ENCODE measurements at regions of chr12 and their contacts with region 1.

Region 1: GRCh38 chr12:56448860-56449621 is at the start of gene TIMELESS:
- DNase-seq: peak; percentile 97
- H3K4me3 Mint-ChIP-seq: peak within 1 kb of the TSS; percentile 95
- H3K27ac Mint-ChIP-seq: peak within 1 kb of the TSS; percentile 90
- H3K4me1 Mint-ChIP-seq: peaks cover 29% of the 10 kb centered on the region
- H3K27me3 Mint-ChIP-seq: no peaks in the 10 kb centered on the region
- total RNA-seq, gene TIMELESS: 46.5 and 48.8 TPM in 2 replicates

Region 2: GRCh38 chr12:56333679-56334489 is 115.2 kb before region 1 on chr12 and contains the start of gene PAN2:
- intact Hi-C with region 1: loop called (anchors 2 kb)
- DNase-seq: peak; percentile 98
- H3K4me3 Mint-ChIP-seq: peak within 1 kb of the TSS; percentile 88
- H3K27ac Mint-ChIP-seq: peak within 1 kb of the TSS; percentile 99
- H3K4me1 Mint-ChIP-seq: peaks cover 42% of the 10 kb centered on the region
- H3K27me3 Mint-ChIP-seq: no peaks in the 10 kb centered on the region
- total RNA-seq, gene PAN2: 31.3 and 34.7 TPM in 2 replicates

Region 3: DNA sequence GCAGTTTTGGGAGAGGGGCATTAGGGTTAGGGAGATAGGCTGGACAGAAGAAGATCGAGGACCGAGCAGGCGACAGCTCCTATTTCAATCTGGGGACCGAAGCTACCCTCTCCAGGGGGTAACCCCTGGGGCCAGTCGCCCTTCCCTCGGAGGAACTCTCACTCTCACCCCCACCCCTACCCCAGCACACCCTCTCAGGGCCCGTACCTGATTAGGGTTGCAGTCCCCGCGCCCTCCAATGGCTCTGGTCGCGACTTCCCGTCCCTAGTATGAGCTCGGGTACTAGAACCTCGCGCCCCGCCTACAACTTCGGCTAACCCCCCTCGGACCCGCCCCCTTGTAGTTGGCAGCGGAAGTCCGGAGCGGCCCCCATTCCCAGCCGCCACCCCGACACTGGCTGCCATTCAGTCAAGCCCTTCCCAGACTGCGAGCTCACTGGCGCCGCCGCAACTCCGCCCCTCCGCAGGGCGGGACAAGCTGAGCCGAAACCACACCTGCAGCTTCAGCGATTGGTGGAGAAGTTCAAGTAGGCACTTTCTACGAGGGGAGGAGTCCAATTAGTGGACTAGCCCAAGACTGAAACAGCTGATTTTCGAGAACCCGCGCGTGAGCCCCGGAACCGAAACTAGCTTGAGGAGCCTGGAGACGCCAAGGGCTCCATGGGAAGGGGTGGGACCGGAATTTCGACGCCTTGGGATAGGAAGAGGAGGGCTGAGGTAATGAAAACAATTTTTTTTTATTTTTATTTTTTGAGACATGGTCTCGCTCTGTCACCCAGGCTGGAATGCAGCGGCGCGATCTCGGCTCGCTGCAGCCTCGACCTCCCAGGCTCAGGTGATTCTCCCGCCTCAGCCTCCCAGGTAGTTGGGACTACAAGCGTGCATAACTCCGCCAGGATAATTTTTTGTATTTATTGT is 88.9 kb before region 1 on chr12 and contains the start of gene STAT2:
- intact Hi-C with region 1: loop called (anchors 2 kb)
- DNase-seq: peak; percentile 100
- H3K4me3 Mint-ChIP-seq: peak within 1 kb of the TSS; percentile 94
- H3K27ac Mint-ChIP-seq: peak within 1 kb of the TSS; percentile 95
- H3K4me1 Mint-ChIP-seq: peaks cover 31% of the 10 kb centered on the region
- H3K27me3 Mint-ChIP-seq: no peaks in the 10 kb centered on the region
- total RNA-seq, gene STAT2: 64.9 and 68.4 TPM in 2 replicates